HEK293T (cell line): ENCODE measurements at regions of chr4 and their contacts with region 1.

Region 1: GRCh38 chr4:153541456-153542096 is 75.4 kb downstream of the TMEM131L start:
- DNase-seq: no peak

Region 2: GRCh38 chr4:153497988-153498967 is 43.3 kb before region 1 on chr4:
- CTCF ChIA-PET with region 1: no interaction called
- POLR2A ChIA-PET with region 1: no interaction called
- DNase-seq: no peak

Region 3: DNA sequence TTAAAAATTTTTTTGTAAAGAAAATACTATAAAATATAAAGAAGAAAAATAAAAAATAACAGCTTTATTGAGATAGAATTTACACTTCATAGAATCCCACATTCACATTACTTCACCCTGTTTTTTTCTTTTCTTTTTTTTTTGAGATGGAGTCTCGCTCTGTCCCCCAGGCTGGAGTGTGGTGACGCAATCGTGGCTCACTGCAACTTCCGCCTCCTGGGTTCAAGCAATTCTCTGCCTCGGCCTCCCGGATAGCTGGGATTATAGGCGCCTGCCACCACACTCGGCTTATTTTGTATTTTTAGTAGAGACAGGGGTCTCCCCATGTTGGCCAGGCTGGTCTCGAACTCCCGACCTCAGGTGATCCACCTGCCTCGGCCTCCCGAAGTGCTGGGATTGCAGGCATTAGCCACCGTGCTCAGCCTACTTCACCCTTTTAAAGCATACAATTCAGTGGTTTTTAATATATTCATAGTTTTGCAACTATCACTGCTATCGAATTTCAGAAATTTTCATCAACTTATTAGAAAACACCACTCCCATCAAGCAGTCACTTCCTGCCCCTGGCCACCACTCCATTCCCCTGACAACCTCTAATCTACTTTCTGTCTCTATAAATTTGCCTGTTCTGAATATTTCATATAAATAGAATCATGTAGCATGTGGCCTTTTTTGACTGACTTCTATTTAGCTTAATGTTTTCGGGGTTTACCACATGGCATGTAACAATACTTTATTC is 26.7 kb before region 1 on chr4:
- CTCF ChIA-PET with region 1: no interaction called
- POLR2A ChIA-PET with region 1: no interaction called
- DNase-seq: no peak

Region 4: GRCh38 chr4:153531000-153531358 is 10.6 kb before region 1 on chr4:
- CTCF ChIA-PET with region 1: interaction called, 12 read pairs
- POLR2A ChIA-PET with region 1: interaction called, 3 read pairs
- DNase-seq: no peak

Region 5: GRCh38 chr4:153643406-153644383 is 102.1 kb after region 1 on chr4:
- CTCF ChIA-PET with region 1: no interaction called
- POLR2A ChIA-PET with region 1: no interaction called
- DNase-seq: peak; percentile 49